Activated CD4-positive, alpha-beta T cell treated with anti-CD3 and anti-CD28 coated beads for 36 hours (primary cell): ENCODE measurements at regions of chr10 and their contacts with region 1.

Region 1: GRCh38 chr10:101774589-101775272 is 1.2 kb downstream of the FGF8 start:
- DNase-seq: peak; percentile 35
- ATAC-seq: peak; percentile 12
- H3K4me3 Mint-ChIP-seq: no peak overlapping the region
- H3K27ac Mint-ChIP-seq: no peak overlapping the region
- H3K4me1 Mint-ChIP-seq: peaks cover 24% of the 10 kb centered on the region
- H3K27me3 Mint-ChIP-seq: peaks cover 55% of the 10 kb centered on the region

Region 2: DNA sequence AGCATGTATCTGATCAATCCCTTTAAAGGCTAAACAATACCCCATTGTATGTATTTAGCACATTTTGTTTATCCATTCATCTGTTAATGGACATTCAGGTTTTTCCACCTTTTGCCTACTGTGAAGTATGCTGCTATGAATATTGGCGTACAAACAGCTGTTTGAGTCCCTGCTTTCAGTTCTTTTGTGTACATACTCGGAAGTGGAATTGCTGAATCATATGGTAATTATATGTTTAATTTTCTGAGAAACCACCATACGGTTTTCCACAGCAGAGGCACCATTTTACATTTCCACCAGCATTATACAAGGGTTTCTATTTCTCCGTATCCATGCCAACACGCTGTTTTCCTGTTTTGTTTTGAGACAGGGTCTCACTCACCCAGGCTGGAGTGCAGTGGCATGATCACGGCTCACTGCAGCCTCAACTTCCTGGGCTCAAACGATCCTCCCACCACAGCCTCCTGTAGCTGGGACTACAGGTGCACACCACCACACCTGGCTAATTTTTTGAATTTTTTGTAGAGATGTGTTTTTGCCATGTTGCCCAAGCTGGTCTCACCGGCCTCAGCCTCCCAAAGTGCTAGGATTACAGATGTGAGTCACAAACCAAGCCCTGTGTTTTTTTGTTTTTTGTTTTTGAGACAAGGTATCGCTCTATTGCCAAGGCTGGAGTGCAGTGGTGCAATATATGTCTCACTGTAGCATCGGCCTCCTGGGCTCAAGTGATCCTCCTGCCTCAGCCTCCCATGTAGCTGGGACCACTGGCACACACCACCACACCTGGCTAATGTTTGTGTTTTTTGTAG is 57.7 kb before region 1 on chr10:
- CTCF ChIA-PET with region 1: no interaction called
- POLR2A ChIA-PET with region 1: no interaction called
- intact Hi-C with region 1: loop called in 1 of 2 experiments (anchors 5 kb)
- DNase-seq: peak; percentile 46
- ATAC-seq: peak; percentile 89
- H3K4me3 Mint-ChIP-seq: no peak overlapping the region
- H3K27ac Mint-ChIP-seq: peak overlapping the region; percentile 60
- H3K4me1 Mint-ChIP-seq: peaks cover 10% of the 10 kb centered on the region
- H3K27me3 Mint-ChIP-seq: peaks cover 11% of the 10 kb centered on the region

Region 3: GRCh38 chr10:102024799-102025198 is 250.1 kb after region 1 on chr10:
- CTCF ChIA-PET with region 1: no interaction called
- POLR2A ChIA-PET with region 1: no interaction called
- intact Hi-C with region 1: no loop called
- DNase-seq: no peak
- ATAC-seq: no peak
- H3K4me3 Mint-ChIP-seq: no peak overlapping the region
- H3K27ac Mint-ChIP-seq: no peak overlapping the region
- H3K4me1 Mint-ChIP-seq: peaks cover 2% of the 10 kb centered on the region
- H3K27me3 Mint-ChIP-seq: no peaks in the 10 kb centered on the region

Region 4: DNA sequence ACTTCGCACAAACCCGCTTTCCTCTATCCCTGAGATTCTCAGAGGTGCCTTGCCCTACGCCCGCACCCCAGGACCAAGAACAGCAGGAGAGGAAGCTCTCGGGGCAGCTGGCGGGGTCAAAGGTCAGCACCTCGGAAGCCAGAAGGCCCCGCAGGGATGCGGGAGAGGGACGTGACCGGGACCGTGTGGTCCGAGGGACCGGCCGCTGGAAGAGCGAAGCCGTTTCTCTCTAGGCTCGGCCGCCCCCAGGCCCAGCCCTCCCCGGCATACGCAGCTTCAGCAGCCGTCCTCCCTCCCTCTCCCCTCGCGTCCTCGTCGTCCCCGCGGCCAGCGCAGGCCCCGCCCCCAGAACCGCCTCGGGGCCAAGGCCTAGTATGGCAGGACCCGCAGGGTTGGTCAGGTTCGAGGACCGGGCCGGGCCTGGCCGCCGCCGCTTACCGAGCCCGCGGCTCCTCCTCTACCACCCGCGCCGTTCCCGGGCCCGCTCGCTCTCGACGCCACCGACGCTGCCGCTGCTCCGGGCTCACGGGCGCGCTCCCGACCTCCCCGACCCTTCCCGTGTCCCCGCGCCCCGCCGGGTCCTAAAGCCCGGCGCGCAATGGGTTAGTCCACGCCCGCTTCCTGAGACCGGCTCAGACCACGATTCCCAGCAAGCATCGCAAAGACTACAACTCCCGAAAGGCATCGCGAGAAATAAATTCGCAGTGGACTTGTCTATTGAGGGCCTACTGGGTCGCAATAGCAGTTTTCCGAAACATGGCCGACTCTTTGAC is 281.1 kb after region 1 on chr10 and contains the start of gene ARMH3:
- CTCF ChIA-PET with region 1: no interaction called
- POLR2A ChIA-PET with region 1: no interaction called
- intact Hi-C with region 1: no loop called
- DNase-seq: peak; percentile 96
- ATAC-seq: peak; percentile 98
- H3K4me3 Mint-ChIP-seq: peak within 1 kb of the TSS; percentile 95
- H3K27ac Mint-ChIP-seq: peak within 1 kb of the TSS; percentile 93
- H3K4me1 Mint-ChIP-seq: peaks cover 40% of the 10 kb centered on the region
- H3K27me3 Mint-ChIP-seq: no peaks in the 10 kb centered on the region
- total RNA-seq, gene ARMH3: 16.0 to 21.0 TPM